ENCODE measurements at regions of chr10 and their contacts with region 1.

Region 1: DNA sequence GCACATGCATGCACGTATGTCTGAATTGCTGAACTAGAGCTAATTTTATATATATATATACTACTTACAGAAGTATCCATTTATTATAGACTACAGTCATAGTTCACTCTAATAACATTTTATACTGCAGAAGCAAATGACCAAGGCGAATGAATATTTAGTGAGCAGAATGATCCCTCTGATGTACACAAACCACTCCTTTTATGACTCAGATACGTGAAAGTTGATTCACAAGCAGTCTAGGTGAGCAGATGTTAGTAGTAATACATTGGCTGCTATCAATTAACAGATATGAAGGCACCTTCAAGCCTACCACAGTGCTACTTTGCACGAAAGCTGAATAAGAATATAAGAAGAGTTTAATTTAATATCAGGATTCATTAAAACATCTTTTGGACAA is 10.4 kb downstream of the GPAM start:
- DNase-seq: no peak
- CTCF ChIP-seq: no peak

Region 2: GRCh38 chr10:112160834-112161233 is 12.4 kb before region 1 on chr10:
- CTCF ChIA-PET with region 1: interaction called, 10 read pairs
- POLR2A ChIA-PET with region 1: no interaction called
- DNase-seq: no peak
- CTCF ChIP-seq: no peak

Region 3: DNA sequence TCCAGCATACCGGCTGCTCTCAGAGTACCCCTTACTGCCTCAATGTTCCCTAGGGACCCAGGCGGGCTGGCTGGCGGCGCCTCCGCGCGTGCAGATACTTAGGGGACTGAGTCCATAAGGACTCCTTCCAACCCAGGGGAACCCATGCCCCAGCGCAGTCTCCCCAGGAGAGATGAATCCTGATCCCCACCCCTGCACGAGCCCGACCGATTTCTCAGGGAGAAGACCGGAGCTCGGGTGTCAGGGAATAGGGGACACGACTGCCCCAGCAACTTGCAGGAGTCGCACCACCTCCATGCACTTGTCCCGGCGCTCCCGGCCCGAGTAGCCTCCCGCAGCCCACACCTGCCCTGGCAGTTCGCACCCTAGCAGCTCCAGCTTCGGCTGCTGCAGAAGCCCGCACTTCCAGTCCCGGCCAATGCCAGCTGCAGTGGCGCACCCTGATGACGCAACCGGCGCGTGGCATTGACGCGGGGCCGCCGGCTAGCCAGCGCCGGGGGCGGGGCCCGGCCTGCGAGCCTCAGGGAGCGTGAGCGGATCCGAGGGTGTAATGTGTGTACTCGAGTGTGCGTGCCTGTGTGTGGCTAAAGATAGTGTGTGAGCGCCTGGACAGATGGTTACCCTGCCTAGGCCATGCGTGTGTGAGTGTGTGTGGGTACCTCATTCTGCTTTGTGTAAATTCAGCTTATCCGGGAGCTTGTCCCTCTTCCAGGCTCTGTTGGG is 10.3 kb after region 1 on chr10 and contains the start of gene GPAM:
- CTCF ChIA-PET with region 1: interaction called, 40 read pairs
- POLR2A ChIA-PET with region 1: no interaction called
- DNase-seq: peak; percentile 95
- CTCF ChIP-seq: no peak

Measured in GM10248 (cell line).